Dendritic cell treated with granulocyte-macrophage colony-stimulating factor and Interleukin-4, amounts not matched to agents 40 ng/mL and 50 ng/mL, for 4 days (primary cell): ENCODE measurements at regions of chr9 and their contacts with region 1.

Region 1: GRCh38 chr9:7186175-7186574 is 428.4 kb downstream of the KDM4C start:
- H3K4me3 Mint-ChIP-seq: no peak overlapping the region
- H3K27ac Mint-ChIP-seq: no peak overlapping the region
- H3K4me1 Mint-ChIP-seq: no peaks in the 10 kb centered on the region
- H3K27me3 Mint-ChIP-seq: no peaks in the 10 kb centered on the region

Region 2: GRCh38 chr9:7055201-7055903 is 130.8 kb before region 1 on chr9:
- intact Hi-C with region 1: loop called (anchors 5 kb)
- H3K4me3 Mint-ChIP-seq: no peak overlapping the region
- H3K27ac Mint-ChIP-seq: no peak overlapping the region
- H3K4me1 Mint-ChIP-seq: no peaks in the 10 kb centered on the region
- H3K27me3 Mint-ChIP-seq: no peaks in the 10 kb centered on the region